ENCODE measurements at regions of chr9 and their contacts with region 1.

Region 1: DNA sequence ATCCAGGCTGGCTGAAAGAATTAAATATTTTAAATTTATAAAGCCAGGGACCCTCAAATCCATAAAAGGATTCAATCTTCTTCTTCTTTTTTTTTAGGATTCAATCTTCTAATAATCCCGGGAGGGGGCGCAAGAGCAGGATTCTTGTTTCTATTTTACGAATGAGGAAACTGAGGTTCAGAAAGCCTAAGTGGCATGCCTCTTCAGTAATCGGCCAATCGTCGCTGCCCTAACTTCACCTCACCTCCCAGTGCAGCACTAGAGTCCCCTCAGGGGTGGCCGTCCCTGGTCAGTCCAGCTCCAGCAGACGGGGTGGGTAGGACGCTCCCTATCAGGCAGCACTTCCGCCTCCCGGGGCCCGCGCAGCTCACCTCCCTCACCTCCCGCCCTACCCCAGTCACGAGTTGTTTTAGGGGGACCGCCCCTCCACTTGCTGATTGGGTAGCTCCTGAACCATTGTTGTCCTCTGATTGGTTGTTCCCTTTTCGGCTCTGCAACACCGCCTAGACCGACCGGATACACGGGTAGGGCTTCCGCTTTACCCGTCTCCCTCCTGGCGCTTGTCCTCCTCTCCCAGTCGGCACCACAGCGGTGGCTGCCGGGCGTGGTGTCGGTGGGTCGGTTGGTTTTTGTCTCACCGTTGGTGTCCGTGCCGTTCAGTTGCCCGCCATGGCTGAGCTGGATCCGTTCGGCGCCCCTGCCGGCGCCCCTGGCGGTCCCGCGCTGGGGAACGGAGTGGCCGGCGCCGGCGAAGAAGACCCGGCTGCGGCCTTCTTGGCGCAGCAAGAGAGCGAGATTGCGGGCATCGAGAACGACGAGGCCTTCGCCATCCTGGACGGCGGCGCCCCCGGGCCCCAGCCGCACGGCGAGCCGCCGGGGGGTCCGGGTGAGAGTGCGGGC is at the start of gene CLTA:
- DNase-seq: peak; percentile 88 to 98
- ATAC-seq: peak; percentile 93 to 98 (median 97)
- H3K4me3 ChIP-seq: peak within 1 kb of the TSS; percentile 85
- H3K4me3 Mint-ChIP-seq: peak within 1 kb of the TSS; percentile 98
- H3K27ac ChIP-seq: peak within 1 kb of the TSS; percentile 88
- H3K27ac Mint-ChIP-seq: peak within 1 kb of the TSS; percentile 84 to 91
- H3K4me1 ChIP-seq: peaks cover 35% of the 10 kb centered on the region
- H3K4me1 Mint-ChIP-seq: peaks cover 62 to 74% of the 10 kb centered on the region in 2 donors
- H3K27me3 ChIP-seq: no peaks in the 10 kb centered on the region
- H3K27me3 Mint-ChIP-seq: no peaks in the 10 kb centered on the region
- CTCF ChIP-seq: peak; percentile 44
- total RNA-seq, gene CLTA: 49.4 to 62.0 (median 52.6) TPM

Region 2: DNA sequence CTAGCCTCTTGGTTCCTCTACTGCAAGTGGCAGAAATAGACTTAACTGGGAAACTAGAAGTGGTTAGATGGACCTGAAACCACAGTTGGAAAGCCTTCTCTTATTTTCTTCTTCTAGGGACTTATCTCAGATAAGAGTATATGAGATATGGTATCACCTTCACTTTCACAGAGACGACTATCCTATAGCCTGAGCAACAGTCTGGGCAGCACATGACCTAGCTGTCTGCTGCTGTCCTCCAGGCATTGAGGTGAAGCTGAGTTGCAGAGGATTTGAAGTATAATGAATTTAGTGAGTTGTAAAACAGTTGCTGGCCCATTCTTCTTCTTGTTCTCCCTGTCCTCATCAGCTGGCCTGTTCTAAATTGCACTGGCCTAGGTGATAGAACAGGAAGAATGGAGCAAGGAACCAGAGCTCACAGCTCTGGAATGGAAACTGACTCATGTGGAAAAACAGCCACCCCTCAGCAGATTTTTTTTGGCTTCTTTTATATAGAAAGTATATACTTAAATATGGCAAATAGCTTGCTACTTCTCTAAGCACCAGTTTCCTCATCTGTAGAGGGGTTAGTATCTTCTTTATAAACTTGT is 126.1 kb before region 1 on chr9:
- intact Hi-C with region 1: no loop called
- DNase-seq: no peak
- ATAC-seq: no peak
- H3K4me3 ChIP-seq: no peak overlapping the region
- H3K4me3 Mint-ChIP-seq: no peak overlapping the region
- H3K27ac ChIP-seq: no peak overlapping the region
- H3K27ac Mint-ChIP-seq: no peak overlapping the region
- H3K4me1 ChIP-seq: no peaks in the 10 kb centered on the region
- H3K4me1 Mint-ChIP-seq: no peaks in the 10 kb centered on the region
- H3K27me3 ChIP-seq: no peaks in the 10 kb centered on the region
- H3K27me3 Mint-ChIP-seq: no peaks in the 10 kb centered on the region
- CTCF ChIP-seq: no peak

Region 3: GRCh38 chr9:36142510-36143244 is 48.0 kb before region 1 on chr9:
- intact Hi-C with region 1: loop called (anchors 2 kb)
- DNase-seq: peak in 1 of 2 donors; percentile 54
- ATAC-seq: peak; percentile 43 to 51 (median 49)
- H3K4me3 ChIP-seq: peak overlapping the region; percentile 51
- H3K4me3 Mint-ChIP-seq: peak overlapping the region; percentile 96
- H3K27ac ChIP-seq: peak overlapping the region; percentile 86
- H3K27ac Mint-ChIP-seq: peak overlapping the region; percentile 93 to 100
- H3K4me1 ChIP-seq: peaks cover 99% of the 10 kb centered on the region
- H3K4me1 Mint-ChIP-seq: peaks cover 98 to 100% of the 10 kb centered on the region in 2 donors
- H3K27me3 ChIP-seq: no peaks in the 10 kb centered on the region
- H3K27me3 Mint-ChIP-seq: no peaks in the 10 kb centered on the region
- CTCF ChIP-seq: no peak

Region 4: GRCh38 chr9:36258208-36258988 is 67.8 kb after region 1 on chr9 and contains the start of gene GNE:
- intact Hi-C with region 1: loop called (anchors 1 kb)
- DNase-seq: peak; percentile 97
- ATAC-seq: peak; percentile 89 to 97 (median 91)
- H3K4me3 ChIP-seq: peak within 1 kb of the TSS; percentile 69
- H3K4me3 Mint-ChIP-seq: peak within 1 kb of the TSS; percentile 95
- H3K27ac ChIP-seq: peak within 1 kb of the TSS; percentile 82
- H3K27ac Mint-ChIP-seq: peak within 1 kb of the TSS; percentile 91 to 95
- H3K4me1 ChIP-seq: peaks cover 15% of the 10 kb centered on the region
- H3K4me1 Mint-ChIP-seq: peaks cover 6 to 15% of the 10 kb centered on the region in 2 donors
- H3K27me3 ChIP-seq: no peaks in the 10 kb centered on the region
- H3K27me3 Mint-ChIP-seq: no peaks in the 10 kb centered on the region
- CTCF ChIP-seq: no peak
- total RNA-seq, gene GNE: 10.6 to 12.4 (median 11.3) TPM